CD8-positive, alpha-beta T cell (primary cell): ENCODE measurements at regions of chr15 and their contacts with region 1.

Region 1: DNA sequence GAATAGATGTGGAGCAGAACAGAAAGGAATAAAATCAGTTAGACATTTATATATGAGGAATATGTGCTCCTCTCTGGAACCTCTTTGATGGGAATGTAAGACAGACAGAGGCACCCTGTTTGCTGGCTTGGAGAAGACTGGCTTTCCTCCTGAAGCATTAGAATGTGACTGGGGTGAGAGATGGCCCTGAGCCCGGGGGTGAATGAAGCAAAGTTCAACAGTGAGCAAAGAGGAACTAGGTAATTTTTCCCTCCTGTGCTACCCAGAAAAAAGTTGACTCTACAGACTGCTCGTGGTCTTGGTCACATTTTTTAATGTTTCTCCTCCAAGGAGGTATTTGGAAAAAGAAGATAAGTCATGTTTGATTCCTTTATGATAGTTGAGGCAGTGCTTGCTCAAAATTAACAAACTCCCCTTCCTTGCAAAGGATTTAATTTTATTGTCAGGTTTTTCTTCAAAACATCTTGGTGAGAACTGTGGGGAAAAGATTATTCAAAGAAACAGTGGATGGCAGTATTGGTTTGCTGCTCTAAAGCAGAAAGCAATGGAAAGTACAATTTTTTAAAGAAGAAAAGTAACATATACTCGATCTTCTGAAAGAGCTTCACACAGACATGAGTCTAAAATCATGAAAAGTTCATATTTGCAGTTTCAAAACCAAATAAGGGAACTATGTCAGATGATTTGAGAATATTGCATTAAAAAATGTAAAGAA is 370.4 kb upstream of the CDIN1 start:
- DNase-seq: no peak
- ATAC-seq: no peak
- H3K4me3 ChIP-seq: no peak overlapping the region
- H3K4me3 Mint-ChIP-seq: no peak overlapping the region
- H3K27ac ChIP-seq: no peak overlapping the region
- H3K27ac Mint-ChIP-seq: no peak overlapping the region
- H3K4me1 ChIP-seq: no peaks in the 10 kb centered on the region
- H3K4me1 Mint-ChIP-seq: no peaks in the 10 kb centered on the region
- H3K27me3 ChIP-seq: no peaks in the 10 kb centered on the region
- H3K27me3 Mint-ChIP-seq: no peaks in the 10 kb centered on the region
- CTCF ChIP-seq: no peak

Region 2: GRCh38 chr15:36256404-36256807 is 47.4 kb after region 1 on chr15:
- CTCF ChIA-PET with region 1: no interaction called
- POLR2A ChIA-PET with region 1: no interaction called
- intact Hi-C with region 1: loop called in 1 of 2 experiments (anchors 5 kb)
- DNase-seq: no peak
- ATAC-seq: no peak
- H3K4me3 ChIP-seq: no peak overlapping the region
- H3K4me3 Mint-ChIP-seq: no peak overlapping the region
- H3K27ac ChIP-seq: no peak overlapping the region
- H3K27ac Mint-ChIP-seq: no peak overlapping the region
- H3K4me1 ChIP-seq: no peaks in the 10 kb centered on the region
- H3K4me1 Mint-ChIP-seq: no peaks in the 10 kb centered on the region
- H3K27me3 ChIP-seq: no peaks in the 10 kb centered on the region
- H3K27me3 Mint-ChIP-seq: no peaks in the 10 kb centered on the region
- CTCF ChIP-seq: no peak